WTC11 (cell line): ENCODE measurements at regions of chr9 and their contacts with region 1.

Region 1: DNA sequence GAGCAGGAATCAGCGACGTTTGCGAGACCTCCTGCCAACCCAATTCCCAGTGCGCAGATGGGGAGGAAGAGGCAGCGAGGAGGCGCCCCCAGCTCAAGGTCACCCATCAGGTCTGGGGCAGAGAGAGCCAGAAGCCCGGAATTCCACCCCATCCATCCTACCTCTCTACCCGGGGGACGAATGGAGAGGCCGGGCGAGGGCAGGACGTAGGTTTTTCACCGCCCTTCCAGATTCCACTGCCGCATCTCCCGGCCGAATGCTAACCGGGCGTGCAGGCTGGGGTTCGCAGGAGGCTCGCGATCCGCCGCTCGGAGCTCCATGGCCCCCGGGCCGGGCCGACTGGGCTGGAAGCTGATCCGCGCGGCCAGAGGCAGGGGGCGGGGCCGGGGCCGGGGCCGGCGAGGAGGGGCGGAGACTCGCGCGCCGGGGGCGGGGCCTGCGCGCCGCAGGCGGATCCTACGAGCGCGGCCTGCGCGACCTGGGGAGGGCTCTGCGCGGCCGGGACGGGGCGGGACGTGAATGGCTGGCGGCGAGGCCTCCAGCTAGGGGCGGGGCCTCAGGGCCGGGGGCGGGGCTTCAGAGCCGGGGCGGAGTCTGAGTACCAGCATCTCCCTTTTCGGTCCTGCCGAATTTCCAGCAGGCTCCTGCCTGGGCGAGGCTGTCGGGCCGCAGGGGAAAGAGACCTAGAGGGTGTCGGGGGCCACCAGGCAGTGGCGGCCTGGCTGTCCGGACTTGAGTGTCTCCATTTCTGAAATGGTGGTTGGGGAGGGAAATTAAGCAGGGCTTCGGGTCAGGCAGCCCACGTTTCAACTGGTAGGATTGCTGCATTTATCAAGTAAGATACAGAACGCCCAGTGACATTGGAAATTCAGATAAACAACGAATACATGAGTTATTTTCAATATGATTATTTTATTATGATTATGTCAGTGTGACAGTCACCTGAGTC is at the start of gene ST6GALNAC4:
- DNase-seq: peak; percentile 96
- ATAC-seq: peak; percentile 92
- H3K4me3 Mint-ChIP-seq: peak within 1 kb of the TSS; percentile 74
- H3K27ac Mint-ChIP-seq: peak within 1 kb of the TSS; percentile 60; the same call in 1 of the 2 replicates
- H3K4me1 Mint-ChIP-seq: peaks cover 19% of the 10 kb centered on the region
- H3K27me3 Mint-ChIP-seq: peaks cover 7% of the 10 kb centered on the region
- CTCF ChIP-seq: no peak
- total RNA-seq, gene ST6GALNAC4: 25.1 to 25.7 TPM (median 25.4 TPM) in 3 replicates

Region 2: GRCh38 chr9:127603226-127603625 is 313.7 kb before region 1 on chr9:
- CTCF ChIA-PET with region 1: no interaction called
- POLR2A ChIA-PET with region 1: no interaction called
- DNase-seq: no peak
- ATAC-seq: no peak
- H3K4me3 Mint-ChIP-seq: no peak overlapping the region
- H3K27ac Mint-ChIP-seq: no peak overlapping the region
- H3K4me1 Mint-ChIP-seq: peaks cover 22% of the 10 kb centered on the region
- H3K27me3 Mint-ChIP-seq: no peaks in the 10 kb centered on the region
- CTCF ChIP-seq: no peak

Region 3: GRCh38 chr9:127614961-127615360 is 302.0 kb before region 1 on chr9:
- CTCF ChIA-PET with region 1: no interaction called
- POLR2A ChIA-PET with region 1: no interaction called
- DNase-seq: no peak
- ATAC-seq: no peak
- H3K4me3 Mint-ChIP-seq: no peak overlapping the region
- H3K27ac Mint-ChIP-seq: no peak overlapping the region
- H3K4me1 Mint-ChIP-seq: peaks cover 16% of the 10 kb centered on the region
- H3K27me3 Mint-ChIP-seq: peaks cover 26% of the 10 kb centered on the region
- CTCF ChIP-seq: no peak

Region 4: DNA sequence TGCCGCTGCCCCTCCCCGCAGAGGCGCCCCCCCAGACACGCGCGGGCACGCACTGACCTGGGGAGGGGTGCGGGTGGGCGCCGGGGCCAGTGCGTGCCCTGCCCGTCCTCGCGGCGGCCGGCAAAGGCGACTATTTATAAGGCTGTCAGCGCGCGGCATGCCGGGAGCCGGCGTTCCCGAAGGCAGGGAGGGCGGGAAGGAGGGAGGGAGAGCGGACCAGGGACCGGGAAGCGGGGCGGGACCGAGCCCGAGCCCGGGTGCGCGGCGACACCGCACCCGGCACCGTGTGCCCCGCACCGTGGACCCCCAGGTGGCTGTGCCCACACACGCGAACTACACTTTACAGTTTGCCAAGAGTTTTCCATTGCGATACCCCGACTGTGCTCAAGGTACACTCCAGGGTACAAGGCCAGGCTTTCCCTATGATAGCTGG is 39.4 kb before region 1 on chr9 and contains the start of gene AK1:
- CTCF ChIA-PET with region 1: interaction called, 13 read pairs
- POLR2A ChIA-PET with region 1: no interaction called
- DNase-seq: peak; percentile 76
- ATAC-seq: peak; percentile 73
- H3K4me3 Mint-ChIP-seq: peak within 1 kb of the TSS; percentile 79
- H3K27ac Mint-ChIP-seq: no peak within 1 kb of the TSS
- H3K4me1 Mint-ChIP-seq: peaks cover 12% of the 10 kb centered on the region
- H3K27me3 Mint-ChIP-seq: no peaks in the 10 kb centered on the region
- CTCF ChIP-seq: no peak
- total RNA-seq, gene AK1: 27.5 to 34.9 TPM (median 34.4 TPM) in 3 replicates

Region 5: GRCh38 chr9:128007566-128008138 is 90.7 kb after region 1 on chr9:
- CTCF ChIA-PET with region 1: no interaction called
- POLR2A ChIA-PET with region 1: no interaction called
- DNase-seq: no peak
- ATAC-seq: no peak
- H3K4me3 Mint-ChIP-seq: no peak overlapping the region
- H3K27ac Mint-ChIP-seq: peak overlapping the region; percentile 87
- H3K4me1 Mint-ChIP-seq: peaks cover 14% of the 10 kb centered on the region
- H3K27me3 Mint-ChIP-seq: peaks cover 4% of the 10 kb centered on the region; the same call in 1 of the 2 replicates
- CTCF ChIP-seq: no peak